ENCODE measurements at regions of chr10 and their contacts with region 1.

Region 1: GRCh38 chr10:123154092-123154921 is at the start of gene BUB3:
- DNase-seq: peak; percentile 89 to 99
- ATAC-seq: peak; percentile 88 to 97 (median 92)
- H3K4me3 ChIP-seq: peak within 1 kb of the TSS; percentile 99
- H3K4me3 Mint-ChIP-seq: peak within 1 kb of the TSS; percentile 99
- H3K27ac ChIP-seq: peak within 1 kb of the TSS; percentile 93
- H3K27ac Mint-ChIP-seq: peak within 1 kb of the TSS; percentile 96 to 100
- H3K4me1 ChIP-seq: peaks cover 37% of the 10 kb centered on the region
- H3K4me1 Mint-ChIP-seq: peaks cover 51 to 59% of the 10 kb centered on the region in 2 donors
- H3K27me3 ChIP-seq: peaks cover 34% of the 10 kb centered on the region
- H3K27me3 Mint-ChIP-seq: peaks cover 20 to 21% of the 10 kb centered on the region in 2 donors
- CTCF ChIP-seq: no peak
- total RNA-seq, gene BUB3: 122 to 145 (median 125) TPM

Region 2: DNA sequence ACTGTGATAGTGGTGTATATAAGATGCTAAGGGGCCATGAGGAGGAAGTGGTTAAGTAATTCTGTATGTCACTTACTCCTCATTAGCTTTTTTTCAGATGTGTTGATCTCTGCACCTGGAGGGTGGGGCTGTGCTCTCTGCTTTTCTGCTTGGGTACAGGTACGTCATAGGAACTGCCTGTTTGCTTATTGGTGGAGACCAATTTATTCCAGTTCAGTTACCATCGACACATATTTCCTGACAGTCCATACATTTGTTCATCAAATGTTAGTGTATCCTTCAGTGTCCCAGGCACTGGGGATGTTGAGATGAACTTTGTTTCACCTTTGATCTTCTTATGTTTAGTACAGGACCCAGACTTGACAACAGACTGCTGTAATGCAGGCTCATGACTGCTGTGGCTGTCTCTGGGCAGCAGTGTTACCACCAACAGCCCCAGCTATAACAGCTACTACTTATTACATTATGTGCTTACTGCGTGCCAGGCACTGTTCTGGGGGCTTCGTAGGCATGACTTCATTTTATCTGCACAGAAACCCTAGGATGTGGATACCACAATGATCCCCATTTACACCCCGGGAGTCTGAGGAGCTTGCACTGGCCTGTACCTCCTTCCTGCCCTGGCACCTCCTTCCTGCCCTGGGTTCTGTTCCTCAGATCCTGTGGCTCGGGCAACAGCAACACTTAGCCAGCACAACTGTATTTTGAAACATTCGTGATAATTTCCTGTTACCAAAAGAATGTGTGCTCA is 87.3 kb after region 1 on chr10:
- intact Hi-C with region 1: loop called (anchors 5 kb)
- DNase-seq: peak; percentile 17 to 85
- ATAC-seq: peak; percentile 80 to 84 (median 81)
- H3K4me3 ChIP-seq: no peak overlapping the region
- H3K4me3 Mint-ChIP-seq: no peak overlapping the region
- H3K27ac ChIP-seq: peak overlapping the region; percentile 80
- H3K27ac Mint-ChIP-seq: peak overlapping the region; percentile 85 to 93
- H3K4me1 ChIP-seq: peaks cover 7% of the 10 kb centered on the region
- H3K4me1 Mint-ChIP-seq: peaks cover 26 to 33% of the 10 kb centered on the region in 2 donors
- H3K27me3 ChIP-seq: no peaks in the 10 kb centered on the region
- H3K27me3 Mint-ChIP-seq: no peaks in the 10 kb centered on the region
- CTCF ChIP-seq: no peak

Measured in natural killer cell (primary cell).